Naive thymus-derived CD4-positive, alpha-beta T cell (primary cell): ENCODE measurements at regions of chr15 and their contacts with region 1.

Region 1: GRCh38 chr15:72272213-72273002 is at the start of gene PARP6:
- DNase-seq: peak; percentile 94 to 100 (median 99)
- ATAC-seq: peak; percentile 96
- H3K4me3 ChIP-seq: peak within 1 kb of the TSS; percentile 71
- H3K4me3 Mint-ChIP-seq: peak within 1 kb of the TSS; percentile 87 to 95 (median 90)
- H3K27ac ChIP-seq: peak within 1 kb of the TSS; percentile 90
- H3K27ac Mint-ChIP-seq: peak within 1 kb of the TSS; percentile 87 to 96 (median 93)
- H3K4me1 ChIP-seq: peaks cover 18 to 25% of the 10 kb centered on the region in 2 donors
- H3K4me1 Mint-ChIP-seq: peaks cover 24 to 53% (median 44%) of the 10 kb centered on the region in 7 donors
- H3K27me3 ChIP-seq: no peaks in the 10 kb centered on the region
- H3K27me3 Mint-ChIP-seq: no peaks in the 10 kb centered on the region
- total RNA-seq, gene PARP6: 75.8 to 129 (median 127) TPM

Region 2: DNA sequence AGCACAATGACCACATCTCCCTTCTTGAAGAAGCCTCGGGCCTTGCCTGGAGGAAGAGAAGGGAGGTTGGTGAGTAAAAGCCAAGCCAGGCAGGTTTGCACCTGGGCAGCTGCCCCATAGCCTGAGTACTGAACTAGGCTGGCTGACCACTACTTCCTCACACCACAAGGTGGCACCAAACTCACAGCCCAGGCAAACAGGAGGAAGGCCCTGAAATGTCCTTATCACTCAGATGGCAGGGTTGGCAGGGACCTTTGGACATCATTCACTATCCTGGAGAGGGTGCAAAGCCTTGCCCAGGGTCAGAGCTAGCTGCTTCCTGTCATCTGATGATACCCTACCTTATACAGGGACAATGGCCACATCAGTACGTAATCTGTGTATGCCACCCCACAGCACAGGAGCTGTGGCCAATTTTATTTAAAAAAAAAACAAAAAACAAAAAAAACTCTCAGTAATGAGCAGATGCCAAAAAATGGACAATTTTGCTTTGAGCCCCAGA is 72.6 kb before region 1 on chr15:
- CTCF ChIA-PET with region 1: interaction called, 4 read pairs
- POLR2A ChIA-PET with region 1: no interaction called
- intact Hi-C with region 1: loop called (anchors 1 kb)
- DNase-seq: peak; percentile 54 to 76 (median 67)
- ATAC-seq: peak; percentile 83
- H3K4me3 ChIP-seq: no peak overlapping the region
- H3K4me3 Mint-ChIP-seq: no peak overlapping the region
- H3K27ac ChIP-seq: no peak overlapping the region
- H3K27ac Mint-ChIP-seq: peak overlapping the region in 1 of 9 donors; percentile 56
- H3K4me1 ChIP-seq: no peaks in the 10 kb centered on the region
- H3K4me1 Mint-ChIP-seq: peaks cover 4 to 31% (median 8%) of the 10 kb centered on the region in 7 donors
- H3K27me3 ChIP-seq: no peaks in the 10 kb centered on the region
- H3K27me3 Mint-ChIP-seq: peaks cover 13 to 22% (median 19%) of the 10 kb centered on the region in 5 donors

Region 3: DNA sequence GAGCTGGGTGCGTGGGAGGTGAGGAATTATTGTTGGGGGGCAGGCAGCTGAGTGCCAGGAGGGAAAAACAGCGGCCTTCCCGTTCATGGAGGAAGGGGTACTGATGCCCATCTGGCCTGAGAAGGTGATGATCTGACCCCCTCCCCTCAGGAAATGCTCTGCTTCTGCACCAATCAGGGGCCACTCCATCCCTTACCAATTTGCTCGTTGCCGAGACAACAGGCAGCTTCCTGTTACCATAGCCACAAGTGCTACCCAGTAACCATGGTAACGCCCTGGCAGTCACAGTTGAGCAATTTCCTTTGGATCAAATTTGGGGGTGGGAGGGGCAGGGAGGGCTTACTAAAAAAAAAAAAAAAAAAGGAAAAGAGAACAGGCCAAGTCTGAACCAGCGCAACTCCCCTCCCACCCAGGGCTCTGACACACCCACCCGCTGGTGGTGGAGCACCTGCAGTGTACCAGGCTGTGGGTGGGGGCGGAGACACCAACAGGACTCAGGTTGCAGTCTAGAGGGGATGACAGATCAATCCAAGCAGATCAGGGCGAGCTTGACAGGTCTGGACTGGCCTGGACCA is 33.9 kb after region 1 on chr15:
- CTCF ChIA-PET with region 1: no interaction called
- POLR2A ChIA-PET with region 1: no interaction called
- intact Hi-C with region 1: loop called in 1 of 2 experiments (anchors 1 kb)
- DNase-seq: peak in 7 of 9 donors; percentile 31 to 71 (median 64)
- ATAC-seq: peak; percentile 79
- H3K4me3 ChIP-seq: no peak overlapping the region
- H3K4me3 Mint-ChIP-seq: no peak overlapping the region
- H3K27ac ChIP-seq: no peak overlapping the region
- H3K27ac Mint-ChIP-seq: peak overlapping the region in 5 of 9 donors; percentile 28 to 47 (median 45)
- H3K4me1 ChIP-seq: peaks cover 0 to 3% of the 10 kb centered on the region in 2 donors
- H3K4me1 Mint-ChIP-seq: peaks cover 0 to 12% (median 5%) of the 10 kb centered on the region in 7 donors
- H3K27me3 ChIP-seq: no peaks in the 10 kb centered on the region
- H3K27me3 Mint-ChIP-seq: no peaks in the 10 kb centered on the region

Region 4: GRCh38 chr15:72685925-72686794 is 413.8 kb after region 1 on chr15 and contains the starts of genes BBS4 and HIGD2B:
- CTCF ChIA-PET with region 1: no interaction called
- POLR2A ChIA-PET with region 1: interaction called, 3 read pairs
- intact Hi-C with region 1: loop called in 1 of 2 experiments (anchors 1 kb)
- DNase-seq: peak; percentile 67 to 88 (median 84)
- ATAC-seq: peak; percentile 97
- H3K4me3 ChIP-seq: peak within 1 kb of the TSS; percentile 99
- H3K4me3 Mint-ChIP-seq: peak within 1 kb of the TSS; percentile 93 to 99 (median 98)
- H3K27ac ChIP-seq: peak within 1 kb of the TSS; percentile 82
- H3K27ac Mint-ChIP-seq: peak within 1 kb of the TSS; percentile 91 to 98 (median 96)
- H3K4me1 ChIP-seq: peaks cover 0 to 5% of the 10 kb centered on the region in 2 donors
- H3K4me1 Mint-ChIP-seq: peaks cover 8 to 25% (median 20%) of the 10 kb centered on the region in 7 donors
- H3K27me3 ChIP-seq: no peaks in the 10 kb centered on the region
- H3K27me3 Mint-ChIP-seq: peaks cover 0 to under 1% (median 0%) of the 10 kb centered on the region in 5 donors
- total RNA-seq, gene BBS4: 11.9 to 26.5 (median 16.2) TPM
- total RNA-seq, gene HIGD2B: 0.57 to 0.69 (median 0.64) TPM in 3 of 5 experiments, not detected in the others